CD8-positive, alpha-beta T cell (primary cell): ENCODE measurements at regions of chr6 and their contacts with region 1.

Region 1: DNA sequence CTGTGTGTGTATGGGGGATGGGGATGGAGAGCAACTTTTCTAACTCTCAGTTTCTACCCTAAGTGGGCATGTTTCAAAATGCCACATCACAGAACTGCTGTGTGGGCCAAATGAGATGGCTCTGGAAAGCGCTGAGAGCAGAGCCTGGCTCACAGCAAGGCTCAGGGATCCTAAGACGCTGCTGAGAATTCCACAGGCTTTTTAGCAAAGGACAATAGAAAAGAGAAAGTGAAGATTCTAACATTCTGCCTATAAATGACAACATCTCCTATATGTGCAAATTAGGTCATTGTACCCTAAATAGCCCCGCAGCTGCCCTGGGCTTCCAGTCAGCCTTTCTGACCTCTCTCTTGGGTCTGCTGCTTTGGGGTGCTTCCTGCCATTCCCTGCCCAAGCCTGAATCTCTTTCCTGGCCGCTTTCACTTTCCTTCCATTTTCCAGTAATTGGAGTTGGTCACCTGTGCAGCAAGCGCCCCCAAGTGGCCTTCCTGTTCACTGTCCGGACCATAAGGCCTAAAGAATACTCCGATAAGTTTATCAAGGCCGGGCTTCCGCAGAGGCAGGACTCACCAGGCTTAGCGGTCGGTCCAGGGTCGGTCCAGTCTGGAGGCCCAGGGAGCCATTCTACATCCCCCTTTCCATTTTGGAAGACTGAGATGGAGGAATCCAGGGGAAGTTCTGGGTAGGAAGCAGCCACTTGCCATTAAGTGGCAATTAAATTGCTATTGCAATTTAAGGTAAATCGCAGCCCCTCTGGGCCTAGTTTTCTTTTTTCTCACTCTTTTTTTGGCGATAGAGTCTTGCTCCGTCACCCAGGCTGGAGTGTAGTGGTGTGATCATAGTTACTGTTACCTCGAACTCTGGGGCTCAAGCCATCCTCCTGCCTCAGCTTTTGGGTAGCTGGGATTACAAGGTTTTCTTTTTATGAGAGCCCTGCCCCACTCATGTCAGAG is 6.6 kb upstream of the DDR1 start:
- DNase-seq: peak; percentile 48 to 87 (median 74)
- ATAC-seq: peak; percentile 90
- H3K4me3 ChIP-seq: peak overlapping the region; percentile 38 to 46
- H3K4me3 Mint-ChIP-seq: peak overlapping the region; percentile 85
- H3K27ac ChIP-seq: peak overlapping the region in 1 of 2 experiments; percentile 49
- H3K27ac Mint-ChIP-seq: peak overlapping the region; percentile 87
- H3K4me1 ChIP-seq: peaks cover 15% of the 10 kb centered on the region
- H3K4me1 Mint-ChIP-seq: peaks cover 19% of the 10 kb centered on the region
- H3K27me3 ChIP-seq: no peaks in the 10 kb centered on the region
- H3K27me3 Mint-ChIP-seq: no peaks in the 10 kb centered on the region
- CTCF ChIP-seq: peak; percentile 70

Region 2: DNA sequence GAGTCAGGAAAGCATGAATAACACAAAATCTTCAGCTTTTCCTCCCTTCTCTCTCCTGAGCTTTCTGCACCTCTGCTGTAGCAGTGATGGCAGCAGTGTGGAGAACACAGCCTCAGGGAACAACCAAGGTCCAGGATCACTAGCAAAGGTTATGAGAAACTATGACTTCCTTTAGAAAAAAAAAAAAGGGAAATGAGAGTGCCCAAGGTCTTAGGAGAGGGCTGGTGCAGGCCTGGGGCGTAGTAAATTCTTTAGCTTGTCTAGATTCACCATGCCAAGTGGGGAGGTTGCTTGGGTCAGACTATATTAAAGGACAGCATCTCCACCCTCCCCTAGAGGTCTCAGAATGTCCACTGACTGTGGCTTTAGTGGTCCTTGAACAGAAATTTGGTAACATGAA is 857.1 kb before region 1 on chr6:
- CTCF ChIA-PET with region 1: no interaction called
- POLR2A ChIA-PET with region 1: no interaction called
- intact Hi-C with region 1: no loop called
- DNase-seq: no peak
- ATAC-seq: no peak
- H3K4me3 ChIP-seq: no peak overlapping the region
- H3K4me3 Mint-ChIP-seq: no peak overlapping the region
- H3K27ac ChIP-seq: no peak overlapping the region
- H3K27ac Mint-ChIP-seq: no peak overlapping the region
- H3K4me1 ChIP-seq: no peaks in the 10 kb centered on the region
- H3K4me1 Mint-ChIP-seq: no peaks in the 10 kb centered on the region
- H3K27me3 ChIP-seq: no peaks in the 10 kb centered on the region
- H3K27me3 Mint-ChIP-seq: no peaks in the 10 kb centered on the region
- CTCF ChIP-seq: no peak

Region 3: GRCh38 chr6:30672445-30673253 is 205.0 kb before region 1 on chr6 and contains the start of gene DHX16:
- CTCF ChIA-PET with region 1: no interaction called
- POLR2A ChIA-PET with region 1: no interaction called
- intact Hi-C with region 1: loop called in 1 of 2 experiments (anchors 10 kb)
- DNase-seq: peak; percentile 77 to 96 (median 90)
- ATAC-seq: peak; percentile 79
- H3K4me3 ChIP-seq: peak within 1 kb of the TSS; percentile 69 to 81
- H3K4me3 Mint-ChIP-seq: peak within 1 kb of the TSS; percentile 90
- H3K27ac ChIP-seq: peak within 1 kb of the TSS; percentile 51 to 71
- H3K27ac Mint-ChIP-seq: peak within 1 kb of the TSS; percentile 82
- H3K4me1 ChIP-seq: peaks cover 15% of the 10 kb centered on the region
- H3K4me1 Mint-ChIP-seq: peaks cover 38% of the 10 kb centered on the region
- H3K27me3 ChIP-seq: no peaks in the 10 kb centered on the region
- H3K27me3 Mint-ChIP-seq: no peaks in the 10 kb centered on the region
- CTCF ChIP-seq: peak; percentile 38
- total RNA-seq, gene DHX16: 15.8 to 17.9 TPM

Region 4: DNA sequence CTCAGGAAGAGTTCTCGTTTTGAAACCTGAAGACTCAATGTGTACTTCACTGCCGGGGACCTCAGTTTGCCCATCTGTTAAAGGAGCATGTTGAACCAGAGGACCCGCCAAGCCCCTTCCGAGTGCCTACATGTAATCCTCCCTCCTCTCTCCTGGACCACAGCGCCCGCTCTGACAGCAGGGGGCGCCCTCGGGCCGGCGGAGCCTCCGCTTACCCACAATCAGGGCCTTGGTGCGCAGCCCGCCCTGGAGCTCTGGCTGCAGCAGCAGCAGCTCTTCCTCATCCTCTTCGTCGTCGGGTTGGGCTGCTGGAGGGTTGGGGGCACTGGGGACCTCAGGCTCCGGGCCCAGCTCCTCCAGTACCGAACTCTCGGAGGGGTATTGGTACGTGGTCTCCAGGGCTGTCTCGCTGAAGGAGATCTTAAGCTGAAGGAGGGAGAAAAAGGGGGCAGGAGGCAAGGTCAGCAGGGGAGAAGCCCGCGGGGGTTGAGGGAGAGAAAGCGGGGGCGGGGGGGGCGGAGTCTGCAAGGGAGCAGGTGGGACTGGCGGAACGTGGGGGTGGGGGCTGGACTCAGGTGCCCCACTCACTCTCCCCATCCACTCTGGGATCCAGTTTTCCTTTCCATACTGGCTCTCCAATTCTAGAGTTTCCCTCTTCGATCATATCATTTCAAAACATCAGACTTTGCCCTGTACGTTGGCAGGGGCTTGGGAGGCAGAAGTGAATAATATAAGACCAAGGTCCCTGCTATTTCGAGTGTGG is 198.6 kb before region 1 on chr6:
- CTCF ChIA-PET with region 1: interaction called, 10 read pairs
- POLR2A ChIA-PET with region 1: no interaction called
- intact Hi-C with region 1: loop called (anchors 2 to 10 kb)
- DNase-seq: peak; percentile 88 to 98 (median 92)
- ATAC-seq: peak; percentile 32
- H3K4me3 ChIP-seq: peak overlapping the region; percentile 86 to 95
- H3K4me3 Mint-ChIP-seq: peak overlapping the region; percentile 99
- H3K27ac ChIP-seq: peak overlapping the region; percentile 21 to 85
- H3K27ac Mint-ChIP-seq: peak overlapping the region; percentile 99
- H3K4me1 ChIP-seq: peaks cover 27% of the 10 kb centered on the region
- H3K4me1 Mint-ChIP-seq: peaks cover 38% of the 10 kb centered on the region
- H3K27me3 ChIP-seq: no peaks in the 10 kb centered on the region
- H3K27me3 Mint-ChIP-seq: no peaks in the 10 kb centered on the region
- CTCF ChIP-seq: peak; percentile 92

Region 5: GRCh38 chr6:30730601-30731435 is 146.9 kb before region 1 on chr6:
- CTCF ChIA-PET with region 1: interaction called, 13 read pairs
- POLR2A ChIA-PET with region 1: no interaction called
- intact Hi-C with region 1: loop called in 1 of 2 experiments (anchors 2 kb)
- DNase-seq: peak; percentile 67 to 91 (median 85)
- ATAC-seq: peak; percentile 98
- H3K4me3 ChIP-seq: peak overlapping the region in 1 of 2 experiments; percentile 21
- H3K4me3 Mint-ChIP-seq: peak overlapping the region; percentile 47
- H3K27ac ChIP-seq: no peak overlapping the region
- H3K27ac Mint-ChIP-seq: no peak overlapping the region
- H3K4me1 ChIP-seq: peaks cover 29% of the 10 kb centered on the region
- H3K4me1 Mint-ChIP-seq: peaks cover 37% of the 10 kb centered on the region
- H3K27me3 ChIP-seq: no peaks in the 10 kb centered on the region
- H3K27me3 Mint-ChIP-seq: no peaks in the 10 kb centered on the region
- CTCF ChIP-seq: peak; percentile 67

Region 6: DNA sequence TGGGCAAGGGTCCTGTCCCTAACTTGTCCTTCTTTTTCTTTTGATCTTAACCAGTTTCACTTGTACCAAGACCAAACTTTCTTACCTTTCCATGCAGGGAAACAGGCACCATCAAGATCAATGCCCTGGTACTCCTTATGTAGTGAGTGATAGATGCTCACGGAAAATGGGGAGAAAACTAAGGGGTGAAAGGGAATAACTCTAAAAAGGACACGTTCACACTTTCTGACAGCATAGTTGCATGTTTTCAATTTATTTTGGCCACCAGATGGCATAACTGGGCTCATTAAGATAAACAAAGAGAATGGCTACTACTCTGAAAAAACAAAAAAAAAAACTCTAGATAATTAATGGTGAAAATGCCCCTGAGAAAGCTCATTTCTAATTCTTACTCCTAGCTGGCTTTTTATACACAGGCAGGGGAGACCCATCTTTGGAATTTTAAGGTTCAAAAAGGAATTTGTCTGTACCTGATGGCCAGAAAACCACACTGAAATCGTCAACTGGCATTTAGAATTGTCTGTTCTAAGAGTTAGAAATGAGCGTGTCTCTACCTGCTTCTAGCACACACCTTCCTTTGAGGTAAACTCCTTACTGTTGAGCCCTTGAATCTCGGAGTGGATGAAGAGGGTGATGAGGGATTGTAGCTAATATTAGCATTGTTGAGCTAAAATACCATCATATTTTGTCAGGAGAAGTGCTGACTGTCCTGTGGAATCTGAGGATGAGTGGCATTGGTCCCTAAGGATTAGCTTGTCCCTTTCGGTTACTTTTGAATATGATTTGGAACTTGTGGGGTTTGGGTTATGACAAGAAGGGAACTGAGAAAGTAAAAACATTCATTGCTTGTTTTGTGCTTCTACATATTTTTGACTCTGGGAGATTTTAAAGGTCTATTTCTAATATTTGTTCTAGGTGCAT is 55.6 kb before region 1 on chr6:
- CTCF ChIA-PET with region 1: interaction called, 113 read pairs
- POLR2A ChIA-PET with region 1: no interaction called
- intact Hi-C with region 1: loop called in 1 of 2 experiments (anchors 1 kb)
- DNase-seq: peak in 2 of 9 experiments; percentile 58 to 64
- ATAC-seq: peak; percentile 44
- H3K4me3 ChIP-seq: no peak overlapping the region
- H3K4me3 Mint-ChIP-seq: no peak overlapping the region
- H3K27ac ChIP-seq: peak overlapping the region in 1 of 2 experiments; percentile 3
- H3K27ac Mint-ChIP-seq: peak overlapping the region; percentile 81
- H3K4me1 ChIP-seq: peaks cover 10% of the 10 kb centered on the region
- H3K4me1 Mint-ChIP-seq: peaks cover 62% of the 10 kb centered on the region
- H3K27me3 ChIP-seq: no peaks in the 10 kb centered on the region
- H3K27me3 Mint-ChIP-seq: no peaks in the 10 kb centered on the region
- CTCF ChIP-seq: peak; percentile 61

Region 7: GRCh38 chr6:30844091-30844535 is 33.6 kb before region 1 on chr6:
- CTCF ChIA-PET with region 1: interaction called, 14 read pairs
- POLR2A ChIA-PET with region 1: no interaction called
- intact Hi-C with region 1: no loop called
- DNase-seq: no peak
- ATAC-seq: no peak
- H3K4me3 ChIP-seq: no peak overlapping the region
- H3K4me3 Mint-ChIP-seq: no peak overlapping the region
- H3K27ac ChIP-seq: no peak overlapping the region
- H3K27ac Mint-ChIP-seq: no peak overlapping the region
- H3K4me1 ChIP-seq: peaks cover 13% of the 10 kb centered on the region
- H3K4me1 Mint-ChIP-seq: peaks cover 38% of the 10 kb centered on the region
- H3K27me3 ChIP-seq: no peaks in the 10 kb centered on the region
- H3K27me3 Mint-ChIP-seq: no peaks in the 10 kb centered on the region
- CTCF ChIP-seq: no peak